PC-9 (cell line): ENCODE measurements at regions of chr11 and their contacts with region 1.

Region 1: GRCh38 chr11:126072141-126072741 is 9.6 kb upstream of the CDON start:
- DNase-seq: peak in 1 of 2 experiments; percentile 89
- H3K4me3 ChIP-seq: no peak overlapping the region
- H3K27ac ChIP-seq: peak overlapping the region; percentile 48
- H3K4me1 ChIP-seq: peaks cover 27% of the 10 kb centered on the region
- H3K27me3 ChIP-seq: no peaks in the 10 kb centered on the region
- CTCF ChIP-seq: no peak

Region 2: DNA sequence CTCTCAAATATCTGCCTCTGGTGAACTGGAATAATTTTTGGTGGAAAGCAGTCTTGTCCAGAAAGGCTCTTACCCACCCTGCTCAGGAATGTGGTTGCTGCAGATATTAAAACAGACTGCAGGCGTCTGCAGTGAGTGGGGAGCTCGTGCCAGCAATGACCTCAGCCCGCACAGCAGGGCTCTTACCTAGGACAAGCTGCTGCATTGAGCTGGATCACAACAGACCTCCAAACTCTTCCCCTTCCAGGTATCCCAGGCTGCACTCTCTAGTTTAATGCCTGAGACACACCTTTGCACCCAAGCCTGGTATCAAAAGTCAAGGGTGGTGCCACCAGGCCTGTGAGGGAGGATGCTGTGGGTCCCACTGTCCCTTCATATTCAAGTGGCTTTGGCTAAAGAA is 60.1 kb after region 1 on chr11:
- CTCF ChIA-PET with region 1: no interaction called
- POLR2A ChIA-PET with region 1: interaction called, 9 read pairs
- intact Hi-C with region 1: loop called (anchors 2 kb)
- DNase-seq: peak; percentile 62 to 91
- H3K4me3 ChIP-seq: no peak overlapping the region
- H3K27ac ChIP-seq: peak overlapping the region; percentile 56
- H3K4me1 ChIP-seq: peaks cover 30% of the 10 kb centered on the region
- H3K27me3 ChIP-seq: peaks cover 2% of the 10 kb centered on the region; the same call in 1 of the 2 replicates
- CTCF ChIP-seq: no peak; the same call in 1 of the 2 replicates